GM13977 (cell line): ENCODE measurements at regions of chr17 and their contacts with region 1.

Region 1: GRCh38 chr17:68572138-68572842 is 28.9 kb downstream of the FAM20A start:
- DNase-seq: no peak
- CTCF ChIP-seq: no peak

Region 2: DNA sequence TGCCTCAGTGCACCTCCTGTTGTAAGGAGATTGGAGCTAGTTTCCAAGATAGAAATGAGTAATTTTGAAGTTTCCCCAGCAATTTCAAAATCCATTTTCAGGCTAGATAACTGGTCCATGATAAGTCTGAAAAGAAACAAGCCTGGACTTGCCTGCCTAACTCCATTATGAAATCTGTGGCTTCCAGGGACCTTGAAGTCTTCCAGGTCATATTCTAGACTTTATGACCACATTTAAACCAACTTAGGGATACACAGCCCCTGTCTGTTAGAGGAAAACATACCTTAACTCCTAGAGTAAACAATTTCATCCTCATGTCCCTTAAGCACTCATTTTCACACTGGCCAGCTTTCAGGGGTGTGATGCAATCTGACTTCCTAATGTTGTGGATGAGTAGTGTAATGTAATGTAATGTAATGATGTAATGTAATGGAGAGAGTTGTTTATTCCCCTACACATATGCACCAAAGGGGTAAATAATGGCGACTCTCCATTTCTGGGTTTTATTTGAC is 125.6 kb after region 1 on chr17:
- in situ Hi-C with region 1: no loop called
- DNase-seq: no peak
- CTCF ChIP-seq: no peak

Region 3: GRCh38 chr17:68733241-68734176 is 161.2 kb after region 1 on chr17:
- in situ Hi-C with region 1: loop called (anchors 25 kb)
- DNase-seq: no peak
- CTCF ChIP-seq: no peak